Activated CD8-positive, alpha-beta T cell treated with anti-CD3 and anti-CD28 coated beads, Interleukin-2, amount 10 ng/mL, durations not matched to agents 7 days and 5 days (primary cell): ENCODE measurements at regions of chr16 and their contacts with region 1.

Region 1: DNA sequence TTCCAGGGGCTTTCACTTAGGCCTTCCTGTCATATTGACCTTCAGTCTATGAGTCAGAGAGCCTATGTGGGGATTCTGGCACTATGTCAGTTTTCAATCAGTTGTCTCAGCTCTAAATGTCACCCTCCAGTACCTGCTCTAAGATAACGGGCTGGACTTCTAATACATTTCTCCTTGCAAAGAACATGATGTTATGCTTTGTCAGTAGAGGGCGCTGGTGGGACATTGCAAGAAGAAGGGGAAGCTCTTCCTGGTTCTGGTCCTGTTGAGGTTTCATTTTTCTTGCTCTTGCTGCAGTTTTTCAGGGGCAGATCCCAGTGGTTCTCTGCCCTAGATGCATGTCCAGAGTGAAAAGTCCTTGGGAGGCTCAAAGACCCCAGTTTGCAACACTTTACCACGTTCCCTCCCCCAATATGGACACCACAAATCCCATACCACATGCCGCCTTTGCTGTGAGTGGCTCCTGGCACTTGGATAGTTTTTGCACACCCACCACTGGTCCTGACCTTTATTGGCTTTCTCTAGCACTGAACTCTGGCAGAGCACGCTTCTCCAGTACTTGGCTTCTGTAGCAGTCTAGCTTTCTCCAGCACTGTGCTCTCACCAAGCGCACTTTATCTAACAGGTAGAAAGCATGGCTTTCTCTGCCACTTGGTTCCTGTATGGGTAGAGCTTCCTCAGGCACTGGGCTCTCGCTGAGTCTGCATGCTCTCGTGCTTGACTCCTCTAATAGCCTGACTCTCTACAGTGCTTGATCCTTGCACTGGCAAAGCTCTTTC is 49.0 kb downstream of the BCL7C start:
- DNase-seq: peak; percentile 93
- ATAC-seq: peak; percentile 93
- H3K4me3 Mint-ChIP-seq: peak overlapping the region; percentile 56
- H3K27ac Mint-ChIP-seq: peak overlapping the region; percentile 85
- H3K4me1 Mint-ChIP-seq: peaks cover 18% of the 10 kb centered on the region
- H3K27me3 Mint-ChIP-seq: no peaks in the 10 kb centered on the region

Region 2: GRCh38 chr16:30813821-30814189 is 31.1 kb before region 1 on chr16:
- CTCF ChIA-PET with region 1: interaction called, 31 read pairs
- POLR2A ChIA-PET with region 1: interaction called, 7 read pairs
- DNase-seq: no peak
- ATAC-seq: peak; percentile 2
- H3K4me3 Mint-ChIP-seq: peak overlapping the region; percentile 83
- H3K27ac Mint-ChIP-seq: peak overlapping the region; percentile 89
- H3K4me1 Mint-ChIP-seq: peaks cover 15% of the 10 kb centered on the region
- H3K27me3 Mint-ChIP-seq: peaks cover 4% of the 10 kb centered on the region

Region 3: DNA sequence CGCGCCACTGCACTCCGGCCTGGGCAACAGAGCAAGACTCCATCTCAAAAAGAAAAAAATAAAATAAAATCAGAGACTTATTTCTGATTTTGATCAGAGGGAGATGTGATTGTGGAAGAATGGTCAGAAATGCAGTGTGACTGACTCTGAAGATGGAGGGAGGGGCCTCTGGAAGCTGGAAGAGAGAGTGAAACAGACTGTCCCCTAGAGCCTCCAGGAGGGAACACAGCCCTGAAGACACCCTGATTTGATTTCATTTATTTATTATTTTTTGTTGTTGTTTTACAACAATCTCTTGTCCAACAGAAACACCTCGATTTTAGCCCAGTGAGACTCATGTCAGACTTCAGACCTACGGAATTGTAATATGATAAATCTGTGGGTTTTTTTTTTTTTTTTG is 22.9 kb after region 1 on chr16:
- CTCF ChIA-PET with region 1: interaction called, 63 read pairs
- POLR2A ChIA-PET with region 1: no interaction called
- DNase-seq: no peak
- ATAC-seq: peak; percentile 51
- H3K4me3 Mint-ChIP-seq: no peak overlapping the region
- H3K27ac Mint-ChIP-seq: no peak overlapping the region
- H3K4me1 Mint-ChIP-seq: peaks cover 3% of the 10 kb centered on the region
- H3K27me3 Mint-ChIP-seq: no peaks in the 10 kb centered on the region

Region 4: GRCh38 chr16:30893744-30894539 is 49.1 kb after region 1 on chr16 and contains the start of gene BCL7C:
- CTCF ChIA-PET with region 1: interaction called, 127 read pairs
- POLR2A ChIA-PET with region 1: no interaction called
- DNase-seq: peak; percentile 86
- ATAC-seq: peak; percentile 89
- H3K4me3 Mint-ChIP-seq: peak within 1 kb of the TSS; percentile 88
- H3K27ac Mint-ChIP-seq: peak within 1 kb of the TSS; percentile 85
- H3K4me1 Mint-ChIP-seq: peaks cover 42% of the 10 kb centered on the region
- H3K27me3 Mint-ChIP-seq: no peaks in the 10 kb centered on the region
- total RNA-seq, gene BCL7C: 30.3 to 34.5 TPM

Region 5: DNA sequence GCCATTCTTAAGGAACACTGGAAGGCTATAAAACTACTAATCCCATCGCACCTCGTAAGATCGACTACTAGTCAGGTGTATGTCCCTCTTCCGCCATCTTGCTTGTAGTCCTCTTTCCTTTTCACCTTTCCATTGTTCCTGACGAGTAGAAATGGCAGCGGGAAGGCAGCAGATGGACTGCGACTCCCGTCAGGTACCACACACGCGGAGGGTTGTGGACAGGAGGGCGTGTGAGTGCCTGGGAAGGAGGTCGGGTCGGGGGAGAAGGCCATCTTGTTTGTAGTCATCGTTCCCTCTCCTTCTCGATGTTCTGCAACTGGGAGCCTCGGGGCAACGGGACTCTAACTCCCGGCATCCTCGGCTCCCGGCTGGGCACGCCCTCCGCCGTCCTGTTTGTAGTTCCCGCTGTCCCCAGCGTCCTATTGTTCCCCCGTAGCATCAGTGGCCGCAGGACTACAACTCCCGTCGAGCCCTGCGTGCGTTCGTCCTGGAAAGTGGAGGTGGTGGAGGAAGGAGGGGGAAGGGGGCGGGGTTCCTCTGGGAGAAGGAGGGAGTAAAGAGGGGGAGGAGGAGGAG is 78.2 kb after region 1 on chr16:
- CTCF ChIA-PET with region 1: interaction called, 55 read pairs
- POLR2A ChIA-PET with region 1: no interaction called
- DNase-seq: peak; percentile 98
- ATAC-seq: peak; percentile 82
- H3K4me3 Mint-ChIP-seq: peak overlapping the region; percentile 97
- H3K27ac Mint-ChIP-seq: peak overlapping the region; percentile 99
- H3K4me1 Mint-ChIP-seq: peaks cover 28% of the 10 kb centered on the region
- H3K27me3 Mint-ChIP-seq: no peaks in the 10 kb centered on the region

Region 6: GRCh38 chr16:30941600-30942425 is 97.0 kb after region 1 on chr16:
- CTCF ChIA-PET with region 1: interaction called, 62 read pairs
- POLR2A ChIA-PET with region 1: interaction called, 3 read pairs
- DNase-seq: peak; percentile 85
- ATAC-seq: peak; percentile 97
- H3K4me3 Mint-ChIP-seq: peak overlapping the region; percentile 66
- H3K27ac Mint-ChIP-seq: peak overlapping the region; percentile 77
- H3K4me1 Mint-ChIP-seq: peaks cover 40% of the 10 kb centered on the region
- H3K27me3 Mint-ChIP-seq: no peaks in the 10 kb centered on the region